Common myeloid progenitor, CD34-positive (primary cell): ENCODE measurements at regions of chr1 and their contacts with region 1.

Region 1: DNA sequence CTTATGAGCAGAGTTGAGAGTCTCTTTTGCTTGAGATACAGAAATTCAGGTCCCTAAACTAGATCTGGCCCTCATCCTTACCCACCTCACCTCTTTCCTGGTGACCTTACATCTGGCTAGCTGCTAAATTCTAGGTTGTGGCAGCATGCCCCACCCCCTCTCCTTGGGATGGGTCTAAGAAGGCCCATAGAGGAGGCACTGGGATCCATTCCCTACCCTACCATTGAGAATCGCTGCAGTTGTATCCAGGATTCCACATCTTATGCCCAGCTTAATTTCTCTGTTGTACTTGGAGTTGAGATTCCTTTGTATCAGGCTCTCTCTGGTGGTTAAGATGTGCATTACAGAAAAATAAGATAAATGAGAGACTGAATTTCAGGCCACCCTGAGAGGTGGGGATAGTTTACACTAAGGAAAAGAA is 9.5 kb upstream of the TMEM39B start:
- DNase-seq: peak; percentile 38 to 67 (median 60)
- H3K4me3 ChIP-seq: no peak overlapping the region
- H3K27ac ChIP-seq: no peak overlapping the region
- H3K4me1 ChIP-seq: peaks cover 6 to 32% (median 27%) of the 10 kb centered on the region in 4 experiments
- H3K27me3 ChIP-seq: no peaks in the 10 kb centered on the region

Region 2: GRCh38 chr1:31955917-31956736 is 107.1 kb before region 1 on chr1:
- CTCF ChIA-PET with region 1: interaction called, 11 read pairs
- POLR2A ChIA-PET with region 1: no interaction called
- DNase-seq: peak; percentile 95 to 98 (median 98)
- H3K4me3 ChIP-seq: peak overlapping the region in 5 of 7 experiments; percentile 3 to 43 (median 20)
- H3K27ac ChIP-seq: peak overlapping the region; percentile 81 to 92
- H3K4me1 ChIP-seq: peaks cover 17 to 61% (median 48%) of the 10 kb centered on the region in 4 experiments
- H3K27me3 ChIP-seq: no peaks in the 10 kb centered on the region

Region 3: GRCh38 chr1:32005522-32005921 is 57.7 kb before region 1 on chr1:
- CTCF ChIA-PET with region 1: interaction called, 10 read pairs
- POLR2A ChIA-PET with region 1: no interaction called
- DNase-seq: no peak
- H3K4me3 ChIP-seq: no peak overlapping the region
- H3K27ac ChIP-seq: no peak overlapping the region
- H3K4me1 ChIP-seq: peaks cover 0 to 14% (median 0%) of the 10 kb centered on the region in 4 experiments
- H3K27me3 ChIP-seq: no peaks in the 10 kb centered on the region

Region 4: DNA sequence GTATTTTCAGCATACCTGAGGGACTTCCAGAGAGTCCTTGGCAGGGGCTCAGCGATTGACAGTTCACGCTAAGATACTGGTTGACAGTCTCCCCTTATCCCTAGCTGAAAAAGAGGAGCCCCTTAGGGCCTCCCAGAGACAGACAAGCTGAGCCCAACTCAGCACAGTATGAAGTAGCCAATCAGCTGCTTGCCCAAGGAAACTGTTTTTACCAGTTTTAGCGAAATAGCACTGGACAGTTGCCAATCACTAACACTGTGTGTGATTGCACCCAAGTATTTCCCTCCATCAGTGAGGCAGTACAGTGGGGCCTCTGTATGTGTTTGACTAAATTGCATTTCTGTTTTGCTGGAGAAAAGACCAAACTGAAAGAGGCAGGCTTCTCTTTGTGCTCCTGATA is 22.6 kb before region 1 on chr1:
- CTCF ChIA-PET with region 1: interaction called, 11 read pairs
- POLR2A ChIA-PET with region 1: interaction called, 3 read pairs
- DNase-seq: no peak
- H3K4me3 ChIP-seq: no peak overlapping the region
- H3K27ac ChIP-seq: no peak overlapping the region
- H3K4me1 ChIP-seq: peaks cover 0 to 9% (median 0%) of the 10 kb centered on the region in 4 experiments
- H3K27me3 ChIP-seq: no peaks in the 10 kb centered on the region

Region 5: GRCh38 chr1:32082022-32082421 is 18.8 kb after region 1 on chr1:
- CTCF ChIA-PET with region 1: no interaction called
- POLR2A ChIA-PET with region 1: no interaction called
- DNase-seq: peak in 2 of 3 donors; percentile 52 to 60
- H3K4me3 ChIP-seq: peak overlapping the region in 1 of 7 experiments; percentile 1
- H3K27ac ChIP-seq: no peak overlapping the region
- H3K4me1 ChIP-seq: peaks cover 4 to 7% (median 7%) of the 10 kb centered on the region in 4 experiments
- H3K27me3 ChIP-seq: no peaks in the 10 kb centered on the region

Region 6: DNA sequence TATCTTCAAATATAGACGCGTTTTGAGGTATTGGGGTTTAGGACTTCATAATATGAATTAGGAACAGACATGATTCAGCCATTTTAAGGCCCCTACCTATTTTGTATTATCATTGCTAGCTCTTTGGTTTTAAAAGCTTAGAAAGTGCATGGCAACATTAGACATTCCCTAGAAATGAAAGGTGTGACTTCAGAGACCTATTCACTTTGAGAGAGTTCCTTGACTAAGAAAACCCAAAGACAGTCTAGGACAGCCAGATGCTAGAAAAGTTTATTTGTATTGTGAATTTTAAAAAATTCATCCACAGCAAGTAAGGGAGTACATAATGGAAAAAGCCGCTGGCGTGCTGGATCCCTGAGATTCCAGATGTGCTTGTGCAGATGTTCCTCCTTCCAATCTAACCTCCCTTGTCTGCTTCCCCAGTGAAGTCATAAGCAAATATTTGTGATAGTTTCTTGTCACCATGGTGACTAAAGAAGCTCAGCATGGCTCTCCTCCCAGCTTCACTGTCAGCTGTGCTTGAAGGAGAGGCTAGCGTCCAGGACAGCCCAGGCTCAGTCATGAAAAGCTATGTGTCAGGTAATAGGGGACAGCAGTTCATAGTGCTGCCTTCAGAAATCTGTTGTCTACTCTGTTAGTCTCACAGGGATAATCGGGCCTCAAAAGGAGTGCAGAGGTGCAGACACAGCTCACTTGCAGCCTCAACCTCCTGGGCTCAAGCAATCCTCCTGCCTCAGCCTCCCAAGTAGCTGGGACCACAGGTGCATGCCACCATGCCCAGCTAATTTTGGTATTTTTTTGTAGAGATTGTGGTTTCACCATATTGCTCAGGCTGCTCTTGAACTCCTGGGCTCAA is 79.4 kb after region 1 on chr1:
- CTCF ChIA-PET with region 1: no interaction called
- POLR2A ChIA-PET with region 1: no interaction called
- DNase-seq: peak; percentile 13 to 56 (median 31)
- H3K4me3 ChIP-seq: no peak overlapping the region
- H3K27ac ChIP-seq: peak overlapping the region in 1 of 2 experiments; percentile 43
- H3K4me1 ChIP-seq: peaks cover 4 to 14% (median 7%) of the 10 kb centered on the region in 4 experiments
- H3K27me3 ChIP-seq: no peaks in the 10 kb centered on the region

Region 7: DNA sequence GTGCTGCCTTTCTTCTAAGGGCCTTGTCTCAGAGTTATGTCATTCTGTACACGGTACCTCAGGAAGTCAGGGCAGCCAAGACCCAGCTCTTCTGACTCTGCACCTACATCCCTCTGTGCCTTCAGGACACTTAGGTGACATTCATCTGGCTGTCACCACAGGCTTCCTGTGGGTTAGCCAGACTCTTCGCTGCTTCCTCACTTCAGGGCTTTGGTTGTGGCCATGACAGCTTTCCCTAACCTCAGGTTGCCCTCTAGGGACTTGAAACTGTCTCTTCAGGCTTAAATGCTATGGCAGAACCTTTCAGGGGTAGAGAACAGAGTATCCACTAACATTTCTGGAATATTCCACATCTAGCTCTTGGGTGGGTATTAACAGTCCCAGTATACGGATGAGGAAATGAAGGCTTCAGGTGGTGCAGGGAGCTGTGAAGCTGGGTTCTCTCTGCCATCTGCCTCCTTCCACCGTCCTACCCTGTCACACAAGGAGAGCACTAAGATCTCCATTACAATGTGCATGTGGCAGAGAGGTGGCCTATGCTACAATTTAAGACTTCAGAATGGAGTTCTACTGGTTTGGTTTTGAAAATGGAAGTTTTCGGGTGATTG is 309.0 kb after region 1 on chr1:
- CTCF ChIA-PET with region 1: no interaction called
- POLR2A ChIA-PET with region 1: no interaction called
- DNase-seq: peak; percentile 74 to 94 (median 94)
- H3K4me3 ChIP-seq: no peak overlapping the region
- H3K27ac ChIP-seq: no peak overlapping the region
- H3K4me1 ChIP-seq: peaks cover 0 to 16% (median 10%) of the 10 kb centered on the region in 4 experiments
- H3K27me3 ChIP-seq: no peaks in the 10 kb centered on the region